Activated CD4-positive, alpha-beta T cell treated with anti-CD3 and anti-CD28 coated beads for 36 hours (primary cell): ENCODE measurements at regions of chr12 and their contacts with region 1.

Region 1: GRCh38 chr12:104958009-104958945 is at the start of gene SLC41A2:
- DNase-seq: peak; percentile 90
- ATAC-seq: peak; percentile 86
- H3K4me3 Mint-ChIP-seq: peak within 1 kb of the TSS; percentile 82
- H3K27ac Mint-ChIP-seq: peak within 1 kb of the TSS; percentile 92
- H3K4me1 Mint-ChIP-seq: peaks cover 27% of the 10 kb centered on the region
- H3K27me3 Mint-ChIP-seq: peaks cover 21% of the 10 kb centered on the region
- total RNA-seq, gene SLC41A2: 7.9 to 11.1 TPM

Region 2: GRCh38 chr12:104286538-104287482 is 671.5 kb before region 1 on chr12:
- CTCF ChIA-PET with region 1: no interaction called
- POLR2A ChIA-PET with region 1: no interaction called
- intact Hi-C with region 1: loop called in 1 of 2 experiments (anchors 2 kb)
- DNase-seq: peak; percentile 95
- ATAC-seq: peak; percentile 84
- H3K4me3 Mint-ChIP-seq: peak overlapping the region; percentile 95
- H3K27ac Mint-ChIP-seq: peak overlapping the region; percentile 97
- H3K4me1 Mint-ChIP-seq: peaks cover 12% of the 10 kb centered on the region
- H3K27me3 Mint-ChIP-seq: no peaks in the 10 kb centered on the region

Region 3: DNA sequence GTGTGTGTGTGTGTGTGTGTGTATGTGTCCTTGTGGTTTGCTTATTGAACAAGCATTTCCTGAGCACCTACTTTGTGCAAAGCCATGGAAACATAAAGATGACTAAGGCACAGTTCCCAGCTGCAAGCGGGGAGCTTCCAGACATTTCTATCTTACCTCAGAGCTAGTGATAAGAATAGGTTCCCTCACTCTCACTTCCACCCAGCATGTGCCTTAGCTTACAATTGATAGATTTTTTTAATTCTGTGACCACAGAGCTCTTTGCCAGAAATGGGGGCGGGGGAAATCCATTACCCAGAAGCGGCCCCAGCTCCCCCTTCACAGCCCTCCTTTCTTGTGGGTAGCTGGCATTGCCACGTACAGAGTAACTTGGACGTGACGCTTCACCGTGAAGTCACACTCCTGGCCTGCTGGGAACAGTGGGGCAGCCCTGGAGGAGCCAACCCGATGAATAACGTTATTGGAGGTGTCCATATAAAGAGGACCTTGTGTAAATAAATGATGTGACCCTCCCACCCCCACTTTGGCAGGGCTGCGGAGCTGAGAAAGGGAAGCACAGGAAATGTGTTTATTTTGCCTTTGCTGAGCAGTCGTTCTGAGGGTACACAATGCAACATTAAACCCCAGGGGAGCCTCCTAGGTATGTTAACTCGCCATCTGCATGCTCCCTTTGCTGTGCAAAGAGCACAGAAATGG is 262.7 kb before region 1 on chr12:
- CTCF ChIA-PET with region 1: no interaction called
- POLR2A ChIA-PET with region 1: no interaction called
- intact Hi-C with region 1: loop called (anchors 1 to 10 kb)
- DNase-seq: peak; percentile 92
- ATAC-seq: peak; percentile 86
- H3K4me3 Mint-ChIP-seq: peak overlapping the region; percentile 36
- H3K27ac Mint-ChIP-seq: peak overlapping the region; percentile 92
- H3K4me1 Mint-ChIP-seq: peaks cover 69% of the 10 kb centered on the region
- H3K27me3 Mint-ChIP-seq: no peaks in the 10 kb centered on the region

Region 4: DNA sequence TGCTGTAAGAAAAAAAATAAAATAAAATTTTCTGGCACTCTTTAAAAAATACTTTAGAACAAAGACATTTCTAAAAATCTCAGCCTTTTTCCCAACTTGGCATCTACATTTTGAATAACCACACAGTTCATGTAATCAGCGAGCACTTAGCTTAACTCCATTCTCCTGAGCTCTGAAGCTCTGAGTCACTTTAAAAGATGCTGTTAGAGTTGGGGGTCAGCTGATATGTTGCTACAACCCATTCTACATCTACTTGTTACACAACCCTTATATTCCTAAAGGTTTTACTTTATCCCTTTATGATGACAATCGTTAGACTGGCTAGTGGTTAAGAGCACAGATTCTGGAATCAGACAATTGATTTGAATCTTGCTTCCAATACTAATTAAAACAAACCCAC is 48.5 kb before region 1 on chr12:
- CTCF ChIA-PET with region 1: no interaction called
- POLR2A ChIA-PET with region 1: no interaction called
- intact Hi-C with region 1: no loop called
- DNase-seq: no peak
- ATAC-seq: no peak
- H3K4me3 Mint-ChIP-seq: no peak overlapping the region
- H3K27ac Mint-ChIP-seq: no peak overlapping the region
- H3K4me1 Mint-ChIP-seq: no peaks in the 10 kb centered on the region
- H3K27me3 Mint-ChIP-seq: no peaks in the 10 kb centered on the region

Region 5: DNA sequence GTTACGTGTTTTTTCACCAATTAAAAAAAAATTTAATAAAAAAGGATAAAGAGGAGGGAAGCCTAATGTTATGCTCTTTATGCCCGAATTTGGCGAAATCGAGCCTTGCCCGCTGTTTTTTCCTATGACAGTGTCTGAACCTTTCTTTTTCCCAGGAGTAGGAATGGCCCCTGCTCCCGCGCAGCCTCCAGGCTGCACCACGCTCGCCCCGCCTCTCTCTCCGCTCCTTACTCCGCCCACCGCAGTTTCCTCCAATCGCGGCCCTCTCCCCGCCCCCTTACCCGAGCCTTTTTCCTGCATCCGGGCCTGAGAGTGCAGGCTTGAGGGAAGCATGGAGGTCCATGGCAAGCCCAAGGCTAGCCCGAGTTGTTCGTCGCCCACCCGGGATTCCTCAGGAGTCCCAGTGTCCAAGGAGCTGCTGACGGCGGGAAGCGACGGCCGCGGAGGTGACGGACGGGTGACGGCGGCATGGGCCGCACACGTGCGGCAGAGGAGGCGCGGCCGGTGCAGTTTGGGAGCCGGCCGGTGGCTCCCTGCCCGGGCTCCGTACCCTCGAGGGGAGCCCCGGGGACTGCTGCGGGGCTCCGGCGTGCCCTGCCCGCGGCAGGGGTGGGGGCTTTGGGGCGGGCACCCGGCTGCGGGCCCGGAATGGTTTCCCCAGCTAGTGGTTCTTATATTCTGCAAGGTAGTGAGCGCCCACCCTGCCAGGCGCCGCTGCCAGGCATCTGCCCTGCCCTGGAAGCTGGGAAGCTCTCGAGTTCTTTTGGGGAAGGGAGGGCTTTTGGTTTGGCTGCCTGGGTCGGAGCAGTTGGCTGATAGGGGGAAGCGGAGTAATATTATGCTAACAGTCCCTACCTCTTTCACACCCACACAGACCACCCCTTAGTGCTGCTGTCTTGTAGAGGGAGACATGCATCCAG is 28.0 kb after region 1 on chr12 and contains the start of gene NOPCHAP1:
- CTCF ChIA-PET with region 1: interaction called, 3 read pairs
- POLR2A ChIA-PET with region 1: no interaction called
- intact Hi-C with region 1: loop called (anchors 1 kb)
- DNase-seq: peak; percentile 91
- ATAC-seq: peak; percentile 98
- H3K4me3 Mint-ChIP-seq: peak within 1 kb of the TSS; percentile 78
- H3K27ac Mint-ChIP-seq: peak within 1 kb of the TSS; percentile 40
- H3K4me1 Mint-ChIP-seq: peaks cover 48% of the 10 kb centered on the region
- H3K27me3 Mint-ChIP-seq: peaks cover 11% of the 10 kb centered on the region
- total RNA-seq, gene NOPCHAP1: 31.1 to 35.2 TPM

Region 6: GRCh38 chr12:105025890-105026289 is 67.6 kb after region 1 on chr12:
- CTCF ChIA-PET with region 1: no interaction called
- POLR2A ChIA-PET with region 1: no interaction called
- intact Hi-C with region 1: no loop called
- DNase-seq: no peak
- ATAC-seq: no peak
- H3K4me3 Mint-ChIP-seq: no peak overlapping the region
- H3K27ac Mint-ChIP-seq: no peak overlapping the region
- H3K4me1 Mint-ChIP-seq: peaks cover 2% of the 10 kb centered on the region
- H3K27me3 Mint-ChIP-seq: no peaks in the 10 kb centered on the region

Region 7: DNA sequence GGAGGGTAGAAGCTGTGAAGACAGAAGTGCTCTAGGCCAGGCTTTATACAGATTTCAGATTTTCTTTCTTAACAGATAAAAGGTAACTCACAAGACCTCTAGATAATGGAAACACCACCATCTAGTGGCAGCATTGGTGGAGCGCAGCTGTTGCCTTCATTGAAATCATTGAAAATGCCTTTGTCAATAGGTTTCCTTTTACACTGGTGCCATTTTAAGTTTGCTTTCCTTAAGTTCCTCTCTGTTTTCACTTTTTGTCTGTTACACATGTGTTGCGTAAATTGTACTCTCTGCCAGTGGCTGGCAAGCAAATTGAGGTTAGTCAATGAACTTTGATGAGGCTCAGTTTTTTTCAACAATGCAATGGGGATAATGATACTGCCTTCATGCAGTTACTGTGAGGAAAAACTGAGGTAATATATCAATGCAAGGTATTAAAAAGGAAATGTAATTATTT is 94.9 kb after region 1 on chr12:
- CTCF ChIA-PET with region 1: interaction called, 4 read pairs
- POLR2A ChIA-PET with region 1: no interaction called
- intact Hi-C with region 1: loop called in 1 of 2 experiments (anchors 1 kb)
- DNase-seq: peak; percentile 85
- ATAC-seq: peak; percentile 85
- H3K4me3 Mint-ChIP-seq: no peak overlapping the region
- H3K27ac Mint-ChIP-seq: no peak overlapping the region
- H3K4me1 Mint-ChIP-seq: peaks cover 4% of the 10 kb centered on the region
- H3K27me3 Mint-ChIP-seq: peaks cover 4% of the 10 kb centered on the region